Activated CD4-positive, alpha-beta T cell treated with anti-CD3 and anti-CD28 coated beads for 36 hours (primary cell): ENCODE measurements at regions of chr7 and their contacts with region 1.

Region 1: DNA sequence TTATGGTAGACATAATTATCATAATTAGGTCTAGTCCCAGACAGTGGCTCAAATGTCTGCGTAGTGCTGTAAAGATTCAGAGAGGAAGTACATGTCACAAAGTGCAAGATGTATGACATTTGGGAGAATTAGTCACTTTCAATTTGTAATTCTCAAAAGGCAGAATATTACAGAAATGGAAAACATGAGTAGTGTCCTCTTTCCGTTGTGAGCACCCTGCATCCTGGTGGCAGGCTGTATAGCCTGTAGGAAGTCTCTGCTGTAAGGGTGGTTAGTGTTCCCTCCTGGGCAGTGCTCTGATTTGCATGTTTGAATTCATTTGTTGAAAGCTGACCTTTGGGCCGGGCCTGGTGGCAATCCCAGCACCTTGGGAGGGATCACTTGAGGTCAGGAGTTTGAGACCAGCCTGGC is 17.0 kb downstream of the CDK14 start:
- DNase-seq: peak; percentile 55
- ATAC-seq: peak; percentile 90
- H3K4me3 Mint-ChIP-seq: no peak overlapping the region
- H3K27ac Mint-ChIP-seq: peak overlapping the region; percentile 75
- H3K4me1 Mint-ChIP-seq: peaks cover 17% of the 10 kb centered on the region
- H3K27me3 Mint-ChIP-seq: peaks cover 8% of the 10 kb centered on the region

Region 2: DNA sequence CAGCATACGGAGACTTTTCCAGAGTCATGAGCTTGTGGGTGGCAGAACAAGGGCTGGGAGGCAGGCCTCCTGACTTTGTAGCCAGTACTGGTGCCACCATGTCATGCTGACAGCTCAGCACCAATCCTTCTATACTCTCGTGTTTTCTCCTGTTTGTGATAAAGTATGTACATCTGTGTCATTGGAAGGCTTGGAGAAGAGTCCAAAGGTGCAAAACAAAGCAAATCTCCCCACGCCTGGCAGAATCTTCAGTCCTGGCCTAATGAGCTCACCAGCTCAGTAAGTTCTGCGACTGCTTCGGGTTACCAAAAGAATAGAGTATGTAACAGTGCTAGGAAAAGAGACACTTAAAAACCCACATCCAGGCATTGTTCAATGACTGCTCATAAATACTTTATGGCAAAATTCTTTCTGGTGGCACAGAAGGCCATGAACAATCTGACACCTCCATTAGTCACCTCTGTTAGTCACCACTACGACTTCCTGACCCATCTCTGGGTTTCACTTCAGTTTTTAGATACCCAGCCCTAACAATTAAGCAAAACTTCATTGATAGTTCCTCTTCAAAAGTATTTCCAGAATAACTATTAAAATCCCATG is 434.3 kb before region 1 on chr7:
- CTCF ChIA-PET with region 1: no interaction called
- POLR2A ChIA-PET with region 1: no interaction called
- intact Hi-C with region 1: loop called in 1 of 2 experiments (anchors 10 kb)
- DNase-seq: peak; percentile 28
- ATAC-seq: peak; percentile 98
- H3K4me3 Mint-ChIP-seq: no peak overlapping the region
- H3K27ac Mint-ChIP-seq: peak overlapping the region; percentile 84
- H3K4me1 Mint-ChIP-seq: peaks cover 20% of the 10 kb centered on the region
- H3K27me3 Mint-ChIP-seq: peaks cover 9% of the 10 kb centered on the region

Region 3: DNA sequence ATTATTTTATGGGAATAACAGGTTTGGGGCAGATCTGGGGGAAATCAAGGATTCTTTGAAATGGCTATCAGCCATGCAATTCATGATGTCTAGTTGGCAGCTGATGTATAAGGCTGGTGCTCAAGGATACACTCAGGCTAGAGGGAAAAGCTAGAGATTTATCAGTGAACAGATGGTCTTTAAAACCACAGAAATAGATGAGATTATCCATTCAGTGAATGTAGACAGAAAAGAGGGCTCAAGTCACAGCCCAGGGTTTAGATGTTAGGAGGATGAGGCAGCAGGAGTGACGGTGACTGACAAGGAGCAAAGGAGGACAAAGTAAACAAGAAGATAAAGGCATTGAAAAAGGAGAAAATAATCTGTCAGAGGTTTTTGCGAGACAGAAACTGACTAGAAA is 221.7 kb after region 1 on chr7:
- CTCF ChIA-PET with region 1: no interaction called
- POLR2A ChIA-PET with region 1: no interaction called
- intact Hi-C with region 1: no loop called
- DNase-seq: no peak
- ATAC-seq: no peak
- H3K4me3 Mint-ChIP-seq: no peak overlapping the region
- H3K27ac Mint-ChIP-seq: no peak overlapping the region
- H3K4me1 Mint-ChIP-seq: no peaks in the 10 kb centered on the region
- H3K27me3 Mint-ChIP-seq: no peaks in the 10 kb centered on the region